Activated B cell treated with CpG ODN at 0.5 μM for 24 hours (primary cell): ENCODE measurements at regions of chr17 and their contacts with region 1.

Region 1: GRCh38 chr17:16438557-16439302 is 23.4 kb downstream of the TRPV2 start:
- DNase-seq: peak; percentile 86
- ATAC-seq: peak; percentile 88
- H3K4me3 Mint-ChIP-seq: peak overlapping the region; percentile 99
- H3K27ac Mint-ChIP-seq: peak overlapping the region; percentile 98
- H3K4me1 Mint-ChIP-seq: peaks cover 40% of the 10 kb centered on the region
- H3K27me3 Mint-ChIP-seq: no peaks in the 10 kb centered on the region
- CTCF ChIP-seq: no peak

Region 2: DNA sequence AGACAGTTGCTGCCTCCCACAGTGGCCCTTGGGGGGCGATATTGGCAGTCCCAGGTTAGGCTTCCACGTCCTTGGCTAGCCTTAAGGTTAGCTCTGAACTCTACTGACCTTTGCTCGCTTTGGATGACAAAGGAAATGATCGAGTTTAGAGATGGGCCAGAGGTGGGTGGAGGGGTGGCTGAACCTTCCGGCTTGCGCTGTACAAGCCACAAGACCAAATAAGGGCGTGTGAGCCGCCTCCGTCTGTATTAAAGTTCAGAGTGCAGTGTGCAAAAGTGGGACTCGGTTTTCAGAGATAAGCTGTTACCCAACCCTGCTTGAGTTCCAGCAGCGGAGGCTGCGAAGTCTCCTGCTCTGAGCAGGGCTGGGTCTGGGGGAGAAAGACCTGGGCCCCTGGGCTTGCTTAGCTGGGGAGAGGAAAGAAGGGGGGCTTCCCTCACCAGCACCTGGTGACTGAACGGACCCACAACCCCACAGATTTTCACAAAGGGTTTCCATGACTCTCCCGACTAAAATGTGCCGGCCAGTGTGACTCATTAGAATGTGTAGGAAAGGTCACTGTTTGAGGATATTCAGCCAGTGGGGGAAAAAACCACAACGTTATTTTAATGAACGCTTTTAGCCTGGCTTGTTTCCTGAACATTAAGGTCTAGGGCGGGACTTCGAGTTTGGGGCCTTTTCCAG is 152.6 kb before region 1 on chr17:
- CTCF ChIA-PET with region 1: no interaction called
- POLR2A ChIA-PET with region 1: interaction called, 5 read pairs
- intact Hi-C with region 1: loop called (anchors 2 kb)
- DNase-seq: peak; percentile 41
- ATAC-seq: peak; percentile 74
- H3K4me3 Mint-ChIP-seq: peak overlapping the region; percentile 82
- H3K27ac Mint-ChIP-seq: peak overlapping the region; percentile 99
- H3K4me1 Mint-ChIP-seq: peaks cover 64% of the 10 kb centered on the region
- H3K27me3 Mint-ChIP-seq: no peaks in the 10 kb centered on the region
- CTCF ChIP-seq: no peak

Region 3: GRCh38 chr17:16380640-16381495 is 57.9 kb before region 1 on chr17 and contains the start of gene UBB:
- CTCF ChIA-PET with region 1: interaction called, 3 read pairs
- POLR2A ChIA-PET with region 1: interaction called, 80 read pairs
- intact Hi-C with region 1: loop called (anchors 1 kb)
- DNase-seq: peak; percentile 83
- ATAC-seq: peak; percentile 90
- H3K4me3 Mint-ChIP-seq: peak within 1 kb of the TSS; percentile 97
- H3K27ac Mint-ChIP-seq: peak within 1 kb of the TSS; percentile 97
- H3K4me1 Mint-ChIP-seq: peaks cover 48% of the 10 kb centered on the region
- H3K27me3 Mint-ChIP-seq: no peaks in the 10 kb centered on the region
- CTCF ChIP-seq: no peak
- total RNA-seq, gene UBB: 1,031 and 1,128 TPM in 2 replicates

Region 4: GRCh38 chr17:16453493-16453851 is 14.7 kb after region 1 on chr17:
- CTCF ChIA-PET with region 1: interaction called, 23 read pairs
- POLR2A ChIA-PET with region 1: interaction called, 6 read pairs
- intact Hi-C with region 1: no loop called
- DNase-seq: no peak
- ATAC-seq: no peak
- H3K4me3 Mint-ChIP-seq: no peak overlapping the region
- H3K27ac Mint-ChIP-seq: no peak overlapping the region
- H3K4me1 Mint-ChIP-seq: no peaks in the 10 kb centered on the region
- H3K27me3 Mint-ChIP-seq: no peaks in the 10 kb centered on the region
- CTCF ChIP-seq: no peak

Region 5: DNA sequence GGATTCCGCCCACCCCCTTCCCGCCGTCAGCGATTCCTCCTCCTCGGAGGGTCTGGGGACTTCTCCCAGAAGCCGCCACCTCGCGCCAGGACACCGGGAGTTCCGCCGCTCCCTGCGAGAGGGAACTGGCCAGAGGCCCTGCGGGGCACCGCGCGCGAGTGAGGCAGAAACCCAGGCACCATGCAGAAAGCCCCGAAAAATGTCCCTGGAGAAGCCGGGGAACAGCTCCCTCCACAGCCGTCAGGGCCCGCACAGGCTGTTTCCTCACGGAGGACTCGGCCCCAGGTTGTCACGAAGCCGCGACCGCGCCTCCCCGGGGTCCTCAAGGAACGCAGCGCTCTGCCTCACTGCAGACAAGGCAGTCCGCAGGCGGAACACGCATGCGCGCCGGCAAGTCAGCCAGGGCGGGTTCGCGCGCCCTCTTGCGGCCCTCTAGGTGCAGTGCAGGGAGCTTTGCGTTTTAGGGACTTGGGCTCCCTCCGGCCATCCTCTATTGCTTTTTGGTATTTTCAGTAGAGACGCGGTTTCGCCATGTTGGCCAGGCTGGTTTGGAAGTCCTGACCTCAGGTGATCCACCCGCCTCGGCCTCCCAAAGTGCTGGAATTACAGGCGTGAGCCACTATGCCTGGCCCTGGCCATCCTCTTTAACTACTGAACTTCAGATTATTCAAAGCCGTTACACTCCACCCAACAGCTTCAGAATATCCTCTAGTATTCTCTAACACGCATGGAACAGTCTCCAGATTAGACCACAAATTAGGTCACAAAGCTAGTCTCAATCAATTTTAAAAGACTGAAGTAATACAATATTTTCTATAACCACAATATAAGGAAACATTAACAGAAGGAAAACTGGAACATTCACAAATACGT is 150.6 kb after region 1 on chr17:
- CTCF ChIA-PET with region 1: interaction called, 3 read pairs
- POLR2A ChIA-PET with region 1: no interaction called
- intact Hi-C with region 1: loop called (anchors 5 kb)
- DNase-seq: peak; percentile 89
- ATAC-seq: peak; percentile 97
- H3K4me3 Mint-ChIP-seq: peak overlapping the region; percentile 74
- H3K27ac Mint-ChIP-seq: no peak overlapping the region
- H3K4me1 Mint-ChIP-seq: peaks cover 5% of the 10 kb centered on the region
- H3K27me3 Mint-ChIP-seq: peaks cover 40% of the 10 kb centered on the region
- CTCF ChIP-seq: peak; percentile 75